A673 (cell line): ENCODE measurements at regions of chr3 and their contacts with region 1.

Region 1: DNA sequence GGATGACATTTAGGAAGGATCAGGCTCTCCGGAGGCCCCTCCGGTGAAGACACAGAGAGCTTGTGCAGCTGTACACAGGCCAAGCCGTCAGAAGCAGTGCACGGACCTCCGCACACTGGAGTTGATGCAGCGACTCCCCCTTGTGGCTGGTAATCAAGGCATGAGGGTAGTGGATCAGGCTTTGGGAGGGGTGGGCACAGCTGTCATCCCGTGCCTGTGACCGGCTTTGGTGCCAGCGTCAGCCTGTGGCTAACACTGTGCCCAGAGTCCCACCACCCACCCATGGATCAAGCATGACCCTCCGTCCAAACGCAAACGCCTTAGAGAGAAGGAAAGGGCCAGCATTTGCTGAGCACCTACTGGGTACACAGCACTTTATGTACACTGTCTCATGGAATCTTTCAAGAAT is 8.2 kb upstream of the GRIP2 start:
- DNase-seq: peak; percentile 85
- H3K4me3 ChIP-seq: no peak overlapping the region
- H3K27ac ChIP-seq: no peak overlapping the region
- H3K4me1 ChIP-seq: no peaks in the 10 kb centered on the region
- H3K27me3 ChIP-seq: no peaks in the 10 kb centered on the region
- CTCF ChIP-seq: peak; percentile 91

Region 2: DNA sequence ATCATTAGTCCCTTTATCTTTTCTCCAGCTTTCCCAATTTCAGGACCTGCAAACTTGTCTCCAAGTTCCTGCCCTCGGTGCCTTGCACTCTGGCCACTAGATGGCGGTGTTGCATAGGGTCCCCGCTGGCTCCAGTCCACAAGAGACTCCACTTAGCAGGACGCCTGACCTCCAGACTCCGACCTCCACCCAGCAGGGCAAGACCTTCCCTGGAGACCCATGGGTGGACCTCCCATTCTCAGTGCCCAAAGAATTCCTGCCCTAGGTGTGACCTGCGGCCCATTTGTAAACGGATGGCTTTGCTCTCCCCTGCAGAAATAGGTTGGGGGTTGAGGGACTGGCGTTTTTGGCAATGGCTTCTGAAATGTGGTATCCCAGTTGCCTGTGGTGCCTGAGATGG is 287.1 kb before region 1 on chr3:
- CTCF ChIA-PET with region 1: no interaction called
- POLR2A ChIA-PET with region 1: no interaction called
- intact Hi-C with region 1: loop called (anchors 1 kb)
- DNase-seq: peak; percentile 74
- H3K4me3 ChIP-seq: no peak overlapping the region
- H3K27ac ChIP-seq: no peak overlapping the region
- H3K4me1 ChIP-seq: no peaks in the 10 kb centered on the region
- H3K27me3 ChIP-seq: no peaks in the 10 kb centered on the region
- CTCF ChIP-seq: peak; percentile 97

Region 3: DNA sequence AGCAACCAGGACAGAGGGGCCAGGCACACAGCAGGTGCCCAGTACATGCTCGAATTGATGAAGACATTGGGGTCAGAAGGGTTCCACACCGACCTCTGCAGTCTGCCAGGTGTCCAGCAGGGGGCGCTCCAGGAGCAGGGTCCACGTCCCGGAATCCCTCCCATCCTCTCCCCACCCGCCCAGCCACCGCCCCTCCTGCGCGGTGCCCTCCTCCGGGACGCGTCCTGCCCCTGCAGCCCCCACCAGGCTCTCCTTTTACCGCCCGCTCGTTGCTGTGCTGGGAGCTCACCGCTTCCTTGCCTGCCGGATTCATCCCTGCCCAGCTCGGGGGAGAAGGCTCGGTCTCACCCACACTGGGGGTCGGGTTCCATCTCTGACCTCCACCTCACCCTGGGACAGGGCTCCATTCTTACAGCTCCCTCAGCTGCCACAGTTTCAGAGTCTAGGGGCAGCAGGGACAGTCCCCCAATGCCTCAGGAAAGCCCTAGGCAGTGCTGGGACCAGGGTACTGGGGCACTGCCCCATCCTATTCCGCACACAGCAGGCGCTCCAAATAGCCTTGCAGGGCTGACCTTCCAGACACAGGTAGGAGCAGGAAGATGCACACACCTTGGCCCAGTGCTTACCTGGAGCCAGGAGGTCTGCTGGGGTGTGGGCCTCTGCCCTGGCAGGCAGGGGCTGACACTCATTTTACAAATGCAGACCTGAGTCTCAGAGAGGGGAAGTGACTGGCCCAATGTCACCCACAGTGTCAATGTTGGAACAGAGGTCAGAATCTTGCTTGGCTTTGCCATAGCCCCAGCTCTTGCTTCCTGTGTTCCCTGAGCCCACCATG is 39.1 kb before region 1 on chr3:
- CTCF ChIA-PET with region 1: interaction called, 10 read pairs
- POLR2A ChIA-PET with region 1: no interaction called
- intact Hi-C with region 1: loop called (anchors 1 kb)
- DNase-seq: peak; percentile 73
- H3K4me3 ChIP-seq: no peak overlapping the region
- H3K27ac ChIP-seq: no peak overlapping the region
- H3K4me1 ChIP-seq: no peaks in the 10 kb centered on the region
- H3K27me3 ChIP-seq: no peaks in the 10 kb centered on the region
- CTCF ChIP-seq: peak; percentile 90

Region 4: GRCh38 chr3:14532691-14533456 is 15.5 kb before region 1 on chr3:
- CTCF ChIA-PET with region 1: no interaction called
- POLR2A ChIA-PET with region 1: no interaction called
- intact Hi-C with region 1: no loop called
- DNase-seq: peak; percentile 71
- H3K4me3 ChIP-seq: no peak overlapping the region
- H3K27ac ChIP-seq: peak overlapping the region; percentile 14
- H3K4me1 ChIP-seq: peaks cover 52% of the 10 kb centered on the region
- H3K27me3 ChIP-seq: no peaks in the 10 kb centered on the region
- CTCF ChIP-seq: no peak